ENCODE measurements at regions of chr11 and their contacts with region 1.

Region 1: DNA sequence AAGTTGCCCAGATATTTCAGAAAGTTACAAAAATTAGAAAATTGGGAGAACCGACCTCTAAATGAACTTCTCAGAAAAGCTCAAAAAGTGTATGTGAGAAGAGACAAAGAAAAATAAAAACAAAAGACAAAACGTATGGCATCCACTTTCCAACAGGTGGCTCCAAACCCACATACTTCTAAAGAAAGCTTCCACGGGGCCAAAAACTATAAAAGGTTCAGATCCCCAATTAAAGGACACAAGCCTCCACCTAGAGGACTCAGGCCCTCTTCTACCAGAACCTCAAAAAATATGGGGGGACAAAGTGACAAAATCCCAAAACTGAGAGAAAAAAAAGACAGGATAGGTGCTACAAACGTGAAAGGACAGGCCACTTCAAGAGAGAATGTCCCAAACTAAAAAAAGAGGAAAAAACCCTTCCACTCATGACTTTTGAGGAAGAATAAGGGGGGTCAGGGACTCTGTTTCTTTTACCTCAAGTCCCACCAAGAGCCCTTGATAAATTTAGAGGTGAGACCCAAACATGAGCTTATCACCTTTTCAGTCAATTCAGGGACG is 8.8 kb downstream of the SCGB2A1 start:
- DNase-seq: peak; percentile 42
- H3K4me3 ChIP-seq: no peak overlapping the region
- H3K27ac ChIP-seq: no peak overlapping the region
- H3K4me1 ChIP-seq: no peaks in the 10 kb centered on the region
- CTCF ChIP-seq: peak; percentile 75

Region 2: GRCh38 chr11:62309991-62310390 is 92.7 kb after region 1 on chr11:
- CTCF ChIA-PET with region 1: no interaction called
- POLR2A ChIA-PET with region 1: interaction called, 3 read pairs
- intact Hi-C with region 1: loop called (anchors 2 kb)
- DNase-seq: no peak
- H3K4me3 ChIP-seq: no peak overlapping the region
- H3K27ac ChIP-seq: no peak overlapping the region
- H3K4me1 ChIP-seq: no peaks in the 10 kb centered on the region
- CTCF ChIP-seq: no peak